GM13976 (cell line): ENCODE measurements at regions of chr7 and their contacts with region 1.

Region 1: DNA sequence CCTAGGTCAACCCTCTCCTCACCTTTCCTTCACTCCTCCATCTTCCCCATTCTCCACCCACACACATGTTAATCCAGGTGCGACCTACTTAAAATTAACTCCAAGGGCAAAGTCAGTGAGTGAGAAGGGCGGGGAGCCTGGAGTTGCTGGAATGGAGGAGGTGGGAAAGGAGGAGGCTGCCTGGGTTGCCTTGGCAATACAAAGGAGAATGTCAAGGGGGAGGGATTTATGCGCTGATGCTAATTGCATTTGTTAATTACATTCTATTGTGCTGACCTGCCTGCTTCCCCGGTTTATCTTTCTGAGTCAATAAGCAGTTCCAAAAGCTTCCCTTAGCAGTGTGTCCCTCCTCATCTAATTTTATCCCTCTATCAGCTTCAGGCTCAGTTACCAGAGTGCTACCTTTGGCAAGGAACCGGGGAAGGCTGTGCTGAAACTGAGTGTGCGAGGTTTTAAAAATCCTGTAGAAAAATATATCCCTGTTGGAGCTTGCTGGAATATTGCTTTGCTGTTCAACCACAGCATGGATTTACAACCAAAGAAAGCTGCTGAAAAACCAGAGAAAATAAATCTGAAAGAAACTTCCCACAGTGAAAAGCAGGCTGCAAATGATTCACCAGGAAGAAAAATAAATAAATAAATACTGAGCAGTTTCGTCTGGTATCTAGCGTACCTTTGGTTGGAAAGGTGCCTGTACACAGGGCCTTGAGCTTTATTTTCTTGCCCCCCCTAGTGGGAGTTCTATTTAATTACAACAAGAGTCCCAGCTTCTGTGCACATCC is 113.2 kb upstream of the DGKB start:
- DNase-seq: peak; percentile 11
- CTCF ChIP-seq: peak; percentile 35

Region 2: DNA sequence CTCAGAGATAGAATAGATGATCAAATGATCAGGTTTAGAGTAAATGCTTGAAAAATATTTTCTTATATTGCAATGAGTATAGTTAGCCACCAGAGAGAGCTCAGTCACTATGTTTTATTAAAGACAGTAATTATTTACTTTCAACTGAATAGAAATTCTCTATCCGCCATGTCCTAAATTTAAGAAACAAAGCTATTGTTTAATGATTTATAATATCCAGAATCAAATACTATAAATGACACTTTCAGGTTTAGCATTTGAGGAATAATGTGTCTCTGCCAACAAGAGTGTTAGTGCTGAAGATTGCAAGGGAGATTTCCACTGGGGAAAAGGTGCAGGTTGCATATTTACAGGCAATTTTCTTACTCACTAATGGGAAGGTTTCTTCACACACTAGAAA is 297.9 kb before region 1 on chr7:
- in situ Hi-C with region 1: loop called (anchors 10 kb)
- DNase-seq: no peak
- CTCF ChIP-seq: no peak